ENCODE measurements at regions of chr2 and their contacts with region 1.

Region 1: DNA sequence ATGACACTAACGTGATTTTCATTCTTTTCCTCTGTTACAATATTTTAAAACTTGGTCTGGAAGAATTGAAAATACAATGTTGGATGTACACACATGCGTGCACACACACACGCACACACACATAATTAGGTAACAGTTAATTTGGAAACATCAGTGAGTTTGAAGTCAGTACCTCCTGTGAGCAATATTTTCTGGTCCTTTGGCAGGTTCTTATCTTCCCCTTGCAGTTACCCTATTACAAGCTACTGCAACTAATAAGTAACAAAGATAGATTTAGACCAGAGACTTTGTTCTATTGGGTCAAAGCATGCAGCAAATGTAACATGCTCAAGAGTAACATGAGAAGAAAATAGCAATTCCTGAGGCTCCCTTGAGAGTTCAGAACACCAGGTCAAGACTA is 73.3 kb downstream of the ZNF385B start:
- DNase-seq: no peak
- H3K4me3 Mint-ChIP-seq: no peak overlapping the region
- H3K27ac Mint-ChIP-seq: no peak overlapping the region
- H3K4me1 Mint-ChIP-seq: peaks cover 17% of the 10 kb centered on the region
- H3K27me3 Mint-ChIP-seq: no peaks in the 10 kb centered on the region
- CTCF ChIP-seq: no peak

Region 2: GRCh38 chr2:179729961-179730360 is 58.1 kb before region 1 on chr2:
- CTCF ChIA-PET with region 1: no interaction called
- POLR2A ChIA-PET with region 1: no interaction called
- intact Hi-C with region 1: loop called (anchors 2 kb)
- DNase-seq: no peak
- H3K4me3 Mint-ChIP-seq: no peak overlapping the region
- H3K27ac Mint-ChIP-seq: no peak overlapping the region
- H3K4me1 Mint-ChIP-seq: no peaks in the 10 kb centered on the region
- H3K27me3 Mint-ChIP-seq: no peaks in the 10 kb centered on the region
- CTCF ChIP-seq: no peak

Measured in MCF 10A (cell line).